Spleen (tissue), 13 donors: ENCODE measurements at regions of chr1 and their contacts with region 1.

Region 1: GRCh38 chr1:110460253-110461220 is 9.6 kb downstream of the PROK1 start:
- DNase-seq: peak; percentile 83
- H3K4me3 ChIP-seq: no peak overlapping the region
- H3K27ac ChIP-seq: no peak overlapping the region
- H3K4me1 ChIP-seq: peaks cover 0 to 13% (median 4%) of the 10 kb centered on the region in 6 donors
- H3K27me3 ChIP-seq: no peaks in the 10 kb centered on the region
- CTCF ChIP-seq: peak; percentile 96 to 99 (median 98)
- POLR2A ChIP-seq: no peak

Region 2: DNA sequence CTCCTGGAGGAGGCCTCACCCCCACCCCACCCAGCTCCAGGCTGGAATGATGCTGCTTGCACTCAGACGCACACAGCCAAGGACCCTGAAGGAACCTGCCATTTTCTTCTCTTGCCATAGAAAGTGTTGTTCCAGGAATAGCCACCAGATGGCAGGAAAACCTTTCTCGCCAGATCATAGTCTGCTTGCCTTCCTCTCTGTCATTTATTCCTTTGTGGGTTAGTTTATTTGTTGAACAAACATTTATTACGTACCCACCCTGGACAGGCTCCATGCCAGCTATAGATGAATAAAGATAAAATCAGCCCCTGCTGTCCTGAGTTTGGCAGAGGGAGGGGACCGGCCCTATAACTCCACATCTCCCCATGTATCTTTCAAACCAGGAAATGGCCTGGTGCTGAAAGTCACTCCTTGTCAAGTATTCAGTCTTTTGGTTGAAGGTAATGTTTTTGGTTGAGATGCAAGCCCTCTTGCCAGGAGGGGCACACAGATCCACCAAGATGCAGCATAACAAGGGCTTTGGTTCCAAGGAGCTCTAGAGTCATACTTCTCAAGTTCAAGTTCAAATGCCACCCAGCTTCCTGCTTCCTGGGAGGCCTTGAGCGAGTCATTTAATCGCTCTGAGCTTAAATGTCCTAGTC is 257.4 kb before region 1 on chr1:
- intact Hi-C with region 1: loop called (anchors 5 kb)
- DNase-seq: no peak
- H3K4me3 ChIP-seq: no peak overlapping the region
- H3K27ac ChIP-seq: peak overlapping the region in 3 of 8 donors; percentile 33 to 69 (median 36)
- H3K4me1 ChIP-seq: peaks cover 0 to 23% (median 13%) of the 10 kb centered on the region in 6 donors
- H3K27me3 ChIP-seq: no peaks in the 10 kb centered on the region
- CTCF ChIP-seq: peak; percentile 70 to 94 (median 90)
- POLR2A ChIP-seq: no peak

Region 3: DNA sequence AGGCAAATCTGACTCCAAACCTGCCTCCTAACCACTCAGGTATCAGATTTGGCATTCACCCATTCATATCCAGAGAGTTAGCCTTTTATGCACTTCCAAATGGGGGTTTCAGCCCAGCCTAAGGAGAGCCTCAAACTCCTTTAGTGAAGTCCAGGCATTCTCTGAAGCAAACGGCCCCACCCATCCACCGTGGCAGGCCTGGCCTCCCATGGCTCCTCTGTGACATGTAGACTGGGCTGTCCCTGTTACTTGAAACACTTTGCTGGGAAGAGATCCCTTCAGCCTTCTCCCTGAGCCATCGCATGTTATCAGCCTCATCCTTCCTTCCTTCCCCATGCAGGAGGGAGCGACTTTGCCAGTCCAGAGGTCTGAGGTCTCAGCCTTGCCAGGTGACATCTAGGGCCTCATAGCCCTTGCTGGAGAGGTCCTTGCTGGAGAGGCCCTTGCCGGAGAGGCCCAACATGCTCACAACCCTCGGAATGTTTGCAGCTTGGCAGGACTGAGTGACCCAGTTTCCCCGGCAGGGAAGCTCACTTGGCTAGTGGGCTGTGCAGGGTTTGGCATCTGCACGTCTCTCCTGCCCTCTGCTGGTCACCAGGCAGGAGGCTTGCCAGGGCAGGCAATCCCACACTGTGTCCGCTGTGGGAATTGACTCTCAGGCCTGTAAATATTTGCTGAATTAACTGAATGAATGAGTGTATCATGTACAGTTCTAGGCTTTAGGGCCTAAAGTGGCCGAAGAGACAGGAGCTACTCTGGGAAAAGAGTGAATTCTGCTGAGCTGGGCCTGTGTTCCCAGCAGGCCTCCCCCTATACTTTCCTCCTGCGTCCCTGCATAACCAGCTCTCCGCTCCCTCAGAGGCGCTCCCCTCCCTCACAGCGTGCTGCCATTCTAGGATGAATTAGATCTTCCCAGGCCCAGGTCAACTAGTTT is 148.1 kb before region 1 on chr1:
- intact Hi-C with region 1: loop called (anchors 10 kb)
- DNase-seq: peak; percentile 93
- H3K4me3 ChIP-seq: no peak overlapping the region
- H3K27ac ChIP-seq: no peak overlapping the region
- H3K4me1 ChIP-seq: peaks cover 3 to 28% (median 15%) of the 10 kb centered on the region in 6 donors
- H3K27me3 ChIP-seq: no peaks in the 10 kb centered on the region
- CTCF ChIP-seq: peak; percentile 86 to 99 (median 93)
- POLR2A ChIP-seq: no peak

Region 4: GRCh38 chr1:110412576-110412975 is 48.0 kb before region 1 on chr1:
- intact Hi-C with region 1: loop called (anchors 2 kb)
- DNase-seq: peak; percentile 86
- H3K4me3 ChIP-seq: no peak overlapping the region
- H3K27ac ChIP-seq: peak overlapping the region in 3 of 8 donors; percentile 17 to 38 (median 20)
- H3K4me1 ChIP-seq: peaks cover 9 to 50% (median 22%) of the 10 kb centered on the region in 6 donors
- H3K27me3 ChIP-seq: no peaks in the 10 kb centered on the region
- CTCF ChIP-seq: peak; percentile 70 to 89 (median 84)
- POLR2A ChIP-seq: no peak

Region 5: GRCh38 chr1:110538075-110538474 is 77.5 kb after region 1 on chr1:
- intact Hi-C with region 1: no loop called
- DNase-seq: no peak
- H3K4me3 ChIP-seq: no peak overlapping the region
- H3K27ac ChIP-seq: no peak overlapping the region
- H3K4me1 ChIP-seq: no peaks in the 10 kb centered on the region
- H3K27me3 ChIP-seq: peaks cover 0 to 33% (median 0%) of the 10 kb centered on the region in 7 donors
- CTCF ChIP-seq: no peak
- POLR2A ChIP-seq: no peak